ENCODE measurements at regions of chr17 and their contacts with region 1.

Region 1: GRCh38 chr17:48024937-48025906 is 12.4 kb downstream of the COPZ2 start:
- DNase-seq: peak; percentile 93 to 99
- H3K4me3 ChIP-seq: peak overlapping the region; percentile 61 to 63
- H3K27ac ChIP-seq: peak overlapping the region; percentile 77 to 86
- H3K4me1 ChIP-seq: peaks cover 17 to 31% of the 10 kb centered on the region in 2 donors
- H3K27me3 ChIP-seq: no peaks in the 10 kb centered on the region
- CTCF ChIP-seq: peak; percentile 91 to 93 (median 92)

Region 2: GRCh38 chr17:47905221-47905781 is 119.9 kb before region 1 on chr17:
- intact Hi-C with region 1: loop called (anchors 5 kb)
- DNase-seq: peak; percentile 18 to 91
- H3K4me3 ChIP-seq: peak overlapping the region in 1 of 2 donors; percentile 14
- H3K27ac ChIP-seq: peak overlapping the region; percentile 92 to 96
- H3K4me1 ChIP-seq: peaks cover 42 to 88% of the 10 kb centered on the region in 2 donors
- H3K27me3 ChIP-seq: no peaks in the 10 kb centered on the region
- CTCF ChIP-seq: no peak

Region 3: GRCh38 chr17:48047741-48048383 is 22.6 kb after region 1 on chr17 and contains the start of gene NFE2L1:
- intact Hi-C with region 1: loop called (anchors 1 kb)
- DNase-seq: peak; percentile 99 to 100
- H3K4me3 ChIP-seq: peak within 1 kb of the TSS; percentile 63 to 88
- H3K27ac ChIP-seq: peak within 1 kb of the TSS; percentile 90 to 95
- H3K4me1 ChIP-seq: peaks cover 26 to 40% of the 10 kb centered on the region in 2 donors
- H3K27me3 ChIP-seq: no peaks in the 10 kb centered on the region
- CTCF ChIP-seq: no peak
- total RNA-seq, gene NFE2L1: 114 TPM

Region 4: GRCh38 chr17:48101012-48101720 is 75.9 kb after region 1 on chr17 and contains the start of gene CBX1:
- intact Hi-C with region 1: loop called (anchors 1 kb)
- DNase-seq: peak; percentile 71 to 97
- H3K4me3 ChIP-seq: peak within 1 kb of the TSS; percentile 88 to 94
- H3K27ac ChIP-seq: peak within 1 kb of the TSS; percentile 96 to 98
- H3K4me1 ChIP-seq: peaks cover 0 to 14% of the 10 kb centered on the region in 2 donors
- H3K27me3 ChIP-seq: no peaks in the 10 kb centered on the region
- CTCF ChIP-seq: no peak
- total RNA-seq, gene CBX1: 20.2 TPM

Region 5: DNA sequence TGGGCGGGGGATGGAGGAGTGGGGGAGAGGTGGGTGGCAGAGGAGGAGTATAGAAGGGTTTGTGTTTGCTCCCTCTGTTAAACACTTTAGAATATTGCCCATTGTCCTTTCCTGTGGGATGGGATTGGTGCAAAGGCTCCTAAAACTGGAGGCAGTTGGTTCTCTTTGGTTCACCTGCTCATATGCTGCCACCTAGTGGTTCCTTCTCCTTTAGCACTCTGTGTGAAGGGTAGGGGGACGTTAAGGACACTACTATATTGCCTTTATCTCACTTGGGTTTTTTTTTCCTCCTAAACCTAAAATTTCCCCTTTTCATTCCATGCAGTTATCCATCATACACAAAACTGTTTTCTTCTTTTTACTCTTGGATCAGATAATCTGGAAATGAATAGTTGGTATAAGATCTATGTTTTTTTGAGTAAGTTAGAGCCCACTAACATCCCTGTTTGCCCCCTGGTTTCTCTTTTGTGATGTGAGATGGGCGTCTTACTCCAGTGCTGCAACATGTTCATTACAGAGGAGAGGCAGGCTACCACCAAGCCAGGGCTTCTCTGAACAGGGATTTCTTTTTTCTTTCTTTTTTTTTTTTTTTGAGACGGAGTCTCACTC is 106.1 kb after region 1 on chr17:
- intact Hi-C with region 1: loop called (anchors 1 kb)
- DNase-seq: peak in 1 of 2 donors; percentile 77
- H3K4me3 ChIP-seq: no peak overlapping the region
- H3K27ac ChIP-seq: no peak overlapping the region
- H3K4me1 ChIP-seq: no peaks in the 10 kb centered on the region
- H3K27me3 ChIP-seq: no peaks in the 10 kb centered on the region
- CTCF ChIP-seq: peak; percentile 67 to 89 (median 68)

Region 6: DNA sequence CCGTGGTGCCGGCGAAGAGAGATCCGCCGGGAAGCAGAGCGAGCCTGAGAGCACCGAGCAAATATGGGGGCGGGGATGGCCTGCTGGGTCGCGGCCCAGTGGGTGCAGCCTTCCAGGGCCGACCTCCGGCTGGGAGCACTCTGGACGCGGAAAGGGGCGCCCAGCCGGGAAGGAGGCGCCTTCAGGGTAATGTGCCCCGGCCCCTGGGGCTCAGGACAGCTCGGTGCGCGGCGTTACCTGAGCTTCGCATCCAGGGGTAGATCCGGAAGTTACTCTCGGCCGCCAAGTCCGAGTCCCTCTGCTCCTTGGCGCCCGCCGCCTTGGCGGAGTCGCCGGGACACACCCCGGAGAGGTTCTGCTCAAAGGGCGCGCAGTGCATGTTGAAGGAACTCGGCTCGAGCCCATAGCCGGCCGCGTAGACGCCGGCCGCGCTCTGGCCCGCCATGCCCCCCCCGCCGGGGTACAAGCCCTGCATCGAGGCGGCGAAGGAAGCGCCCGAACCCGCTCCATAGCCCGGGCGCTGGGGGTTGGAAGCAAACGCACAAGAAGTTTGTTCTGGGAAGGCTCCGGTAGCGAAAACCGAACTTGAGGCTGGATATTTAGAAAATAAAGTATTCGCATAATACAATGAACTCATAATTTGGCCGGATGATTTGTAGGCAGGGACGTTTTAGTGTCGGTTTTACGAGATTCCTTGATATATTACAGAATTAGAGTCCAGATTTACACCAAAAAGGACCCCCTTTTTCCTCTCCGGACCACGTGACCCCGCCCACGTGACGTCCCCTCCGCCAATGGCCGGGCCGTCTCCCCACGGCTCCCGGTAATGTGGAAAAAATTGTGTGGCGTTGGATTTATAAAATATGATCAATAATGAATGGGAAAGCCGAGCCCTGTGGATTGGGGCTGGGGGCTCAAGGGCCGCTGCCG is 585.3 kb after region 1 on chr17 and contains the start of gene HOXB7:
- intact Hi-C with region 1: loop called (anchors 5 kb)
- DNase-seq: peak in 1 of 2 donors; percentile 86
- H3K4me3 ChIP-seq: peak within 1 kb of the TSS; percentile 69 to 86
- H3K27ac ChIP-seq: peak within 1 kb of the TSS; percentile 77 to 92
- H3K4me1 ChIP-seq: peaks cover 8 to 20% of the 10 kb centered on the region in 2 donors
- H3K27me3 ChIP-seq: peaks cover 10% of the 10 kb centered on the region
- CTCF ChIP-seq: no peak
- total RNA-seq, gene HOXB7: 15.0 TPM